Mammary epithelial cell (primary cell): ENCODE measurements at regions of chr16 and their contacts with region 1.

Region 1: DNA sequence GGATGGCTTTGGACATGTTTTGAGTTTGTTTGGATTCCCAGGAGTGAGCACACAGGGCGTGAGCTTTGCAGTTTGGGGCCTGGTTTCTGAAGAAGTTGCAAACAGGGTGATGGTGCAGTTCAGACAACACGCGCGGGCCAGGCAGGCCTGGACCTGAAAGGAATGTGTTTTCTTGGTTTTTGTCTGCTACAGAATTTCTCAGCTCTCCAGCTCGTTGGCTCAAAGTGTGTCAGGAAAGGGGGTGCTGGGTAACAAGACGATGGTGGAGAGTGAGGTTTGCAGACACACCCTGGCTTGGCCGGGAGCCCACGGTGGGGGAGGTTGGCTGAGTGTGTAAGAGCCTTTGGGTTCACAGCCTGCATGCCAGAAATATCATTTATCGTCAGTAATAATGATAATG is 82.3 kb downstream of the CMIP start:
- DNase-seq: peak; percentile 100
- H3K4me3 ChIP-seq: no peak overlapping the region
- H3K27ac ChIP-seq: peak overlapping the region; percentile 100
- H3K4me1 ChIP-seq: peaks cover 82% of the 10 kb centered on the region
- H3K27me3 ChIP-seq: no peaks in the 10 kb centered on the region
- CTCF ChIP-seq: no peak

Region 2: GRCh38 chr16:81403616-81404373 is 123.1 kb before region 1 on chr16:
- CTCF ChIA-PET with region 1: no interaction called
- dilution Hi-C with region 1: no loop called
- in situ Hi-C with region 1: loop called in 1 of 2 experiments (anchors 5 kb)
- intact Hi-C with region 1: loop called (anchors 1 kb)
- DNase-seq: peak; percentile 69
- H3K4me3 ChIP-seq: peak overlapping the region in 1 of 3 experiments; percentile 36
- H3K27ac ChIP-seq: peak overlapping the region; percentile 45
- H3K4me1 ChIP-seq: peaks cover 40% of the 10 kb centered on the region
- H3K27me3 ChIP-seq: no peaks in the 10 kb centered on the region
- CTCF ChIP-seq: peak; percentile 66 to 93

Region 3: GRCh38 chr16:81451753-81452680 is 74.9 kb before region 1 on chr16:
- CTCF ChIA-PET with region 1: no interaction called
- dilution Hi-C with region 1: loop called (anchors 5 kb)
- in situ Hi-C with region 1: no loop called
- intact Hi-C with region 1: no loop called
- DNase-seq: no peak
- H3K4me3 ChIP-seq: no peak overlapping the region
- H3K27ac ChIP-seq: no peak overlapping the region
- H3K4me1 ChIP-seq: peaks cover 33% of the 10 kb centered on the region
- H3K27me3 ChIP-seq: no peaks in the 10 kb centered on the region
- CTCF ChIP-seq: no peak

Region 4: GRCh38 chr16:81500833-81501521 is 26.0 kb before region 1 on chr16:
- CTCF ChIA-PET with region 1: no interaction called
- dilution Hi-C with region 1: no loop called
- in situ Hi-C with region 1: no loop called
- intact Hi-C with region 1: loop called (anchors 1 kb)
- DNase-seq: peak; percentile 95
- H3K4me3 ChIP-seq: peak overlapping the region in 1 of 3 experiments; percentile 30
- H3K27ac ChIP-seq: peak overlapping the region; percentile 84
- H3K4me1 ChIP-seq: peaks cover 71% of the 10 kb centered on the region
- H3K27me3 ChIP-seq: no peaks in the 10 kb centered on the region
- CTCF ChIP-seq: no peak

Region 5: GRCh38 chr16:81537721-81538561 is 11.0 kb after region 1 on chr16:
- CTCF ChIA-PET with region 1: no interaction called
- dilution Hi-C with region 1: no loop called
- in situ Hi-C with region 1: no loop called
- intact Hi-C with region 1: no loop called
- DNase-seq: no peak
- H3K4me3 ChIP-seq: no peak overlapping the region
- H3K27ac ChIP-seq: no peak overlapping the region
- H3K4me1 ChIP-seq: peaks cover 22% of the 10 kb centered on the region
- H3K27me3 ChIP-seq: no peaks in the 10 kb centered on the region
- CTCF ChIP-seq: no peak

Region 6: GRCh38 chr16:81567987-81568748 is 41.2 kb after region 1 on chr16:
- CTCF ChIA-PET with region 1: no interaction called
- dilution Hi-C with region 1: no loop called
- in situ Hi-C with region 1: no loop called
- intact Hi-C with region 1: loop called (anchors 5 kb)
- DNase-seq: peak; percentile 81
- H3K4me3 ChIP-seq: no peak overlapping the region
- H3K27ac ChIP-seq: peak overlapping the region; percentile 76
- H3K4me1 ChIP-seq: peaks cover 49% of the 10 kb centered on the region
- H3K27me3 ChIP-seq: no peaks in the 10 kb centered on the region
- CTCF ChIP-seq: no peak

Region 7: GRCh38 chr16:81600901-81601428 is 74.0 kb after region 1 on chr16:
- CTCF ChIA-PET with region 1: no interaction called
- dilution Hi-C with region 1: no loop called
- in situ Hi-C with region 1: no loop called
- intact Hi-C with region 1: loop called (anchors 1 kb)
- DNase-seq: peak; percentile 97
- H3K4me3 ChIP-seq: no peak overlapping the region
- H3K27ac ChIP-seq: peak overlapping the region; percentile 93
- H3K4me1 ChIP-seq: peaks cover 54% of the 10 kb centered on the region
- H3K27me3 ChIP-seq: no peaks in the 10 kb centered on the region
- CTCF ChIP-seq: no peak